Activated CD8-positive, alpha-beta T cell treated with anti-CD3 and anti-CD28 coated beads, Interleukin-2, amount 10 ng/mL, durations not matched to agents 7 days and 5 days (primary cell): ENCODE measurements at regions of chr11 and their contacts with region 1.

Region 1: GRCh38 chr11:19076744-19077589 is 16.4 kb upstream of the MRGPRX2 start:
- DNase-seq: peak; percentile 69
- ATAC-seq: peak; percentile 68
- H3K4me3 Mint-ChIP-seq: no peak overlapping the region
- H3K27ac Mint-ChIP-seq: no peak overlapping the region
- H3K4me1 Mint-ChIP-seq: no peaks in the 10 kb centered on the region
- H3K27me3 Mint-ChIP-seq: peaks cover 18% of the 10 kb centered on the region

Region 2: GRCh38 chr11:18972336-18972735 is 104.6 kb before region 1 on chr11:
- CTCF ChIA-PET with region 1: no interaction called
- POLR2A ChIA-PET with region 1: no interaction called
- DNase-seq: no peak
- ATAC-seq: no peak
- H3K4me3 Mint-ChIP-seq: no peak overlapping the region
- H3K27ac Mint-ChIP-seq: no peak overlapping the region
- H3K4me1 Mint-ChIP-seq: no peaks in the 10 kb centered on the region
- H3K27me3 Mint-ChIP-seq: no peaks in the 10 kb centered on the region

Region 3: GRCh38 chr11:19110280-19110679 is 33.3 kb after region 1 on chr11:
- CTCF ChIA-PET with region 1: interaction called, 10 read pairs
- POLR2A ChIA-PET with region 1: no interaction called
- DNase-seq: no peak
- ATAC-seq: no peak
- H3K4me3 Mint-ChIP-seq: no peak overlapping the region
- H3K27ac Mint-ChIP-seq: no peak overlapping the region
- H3K4me1 Mint-ChIP-seq: no peaks in the 10 kb centered on the region
- H3K27me3 Mint-ChIP-seq: peaks cover 17% of the 10 kb centered on the region

Region 4: DNA sequence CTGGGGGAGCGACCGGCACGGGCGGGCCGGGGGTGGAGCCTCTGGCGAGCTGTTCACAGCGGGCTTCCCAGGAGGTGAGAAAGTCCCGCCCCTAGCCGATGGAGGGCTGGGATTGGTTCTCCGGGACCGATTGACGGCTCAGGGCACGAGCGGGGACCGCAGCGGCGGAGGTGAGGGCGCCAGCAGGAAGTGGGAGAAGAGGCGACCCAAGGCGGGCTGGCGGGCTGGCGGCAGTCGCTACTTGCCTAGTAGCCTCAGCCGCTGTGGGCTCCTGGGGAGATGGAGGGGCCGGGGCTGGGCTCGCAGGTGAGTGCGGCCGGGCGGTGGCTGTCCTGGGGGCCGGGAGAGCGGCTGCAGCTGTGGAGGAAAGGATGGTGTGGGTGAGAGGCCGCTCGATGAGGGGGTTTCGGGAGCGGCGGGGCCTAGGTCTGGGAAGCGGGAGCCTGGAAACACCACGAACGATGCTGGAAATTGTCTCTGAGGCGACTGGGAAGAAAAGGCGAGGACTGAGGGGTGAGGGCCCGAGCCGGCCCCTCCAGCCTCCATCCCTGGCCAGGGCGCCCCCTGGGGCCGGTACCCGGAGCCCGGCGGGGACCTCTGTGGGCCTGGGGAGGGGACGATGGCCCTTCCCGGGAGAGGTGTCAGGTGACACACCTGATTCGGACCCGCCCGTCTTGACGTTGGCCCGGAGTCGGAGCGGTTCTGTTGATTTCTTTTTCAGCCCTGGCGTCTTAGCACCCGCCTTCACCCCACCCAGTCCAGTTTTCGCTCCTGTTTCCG is 40.2 kb after region 1 on chr11 and contains the start of gene ZDHHC13:
- CTCF ChIA-PET with region 1: interaction called, 13 read pairs
- POLR2A ChIA-PET with region 1: no interaction called
- DNase-seq: peak; percentile 96
- ATAC-seq: peak; percentile 100
- H3K4me3 Mint-ChIP-seq: peak within 1 kb of the TSS; percentile 88
- H3K27ac Mint-ChIP-seq: peak within 1 kb of the TSS; percentile 88
- H3K4me1 Mint-ChIP-seq: peaks cover 41% of the 10 kb centered on the region
- H3K27me3 Mint-ChIP-seq: peaks cover 10% of the 10 kb centered on the region
- total RNA-seq, gene ZDHHC13: 23.9 to 25.7 TPM

Region 5: GRCh38 chr11:19160847-19161246 is 83.9 kb after region 1 on chr11:
- CTCF ChIA-PET with region 1: interaction called, 11 read pairs
- POLR2A ChIA-PET with region 1: interaction called, 3 read pairs
- DNase-seq: no peak
- ATAC-seq: no peak
- H3K4me3 Mint-ChIP-seq: no peak overlapping the region
- H3K27ac Mint-ChIP-seq: no peak overlapping the region
- H3K4me1 Mint-ChIP-seq: peaks cover 12% of the 10 kb centered on the region
- H3K27me3 Mint-ChIP-seq: no peaks in the 10 kb centered on the region

Region 6: GRCh38 chr11:19187114-19187832 is 110.3 kb after region 1 on chr11:
- CTCF ChIA-PET with region 1: no interaction called
- POLR2A ChIA-PET with region 1: no interaction called
- DNase-seq: no peak
- ATAC-seq: no peak
- H3K4me3 Mint-ChIP-seq: no peak overlapping the region
- H3K27ac Mint-ChIP-seq: no peak overlapping the region
- H3K4me1 Mint-ChIP-seq: no peaks in the 10 kb centered on the region
- H3K27me3 Mint-ChIP-seq: no peaks in the 10 kb centered on the region